ENCODE measurements at regions of chr19 and their contacts with region 1.

Region 1: DNA sequence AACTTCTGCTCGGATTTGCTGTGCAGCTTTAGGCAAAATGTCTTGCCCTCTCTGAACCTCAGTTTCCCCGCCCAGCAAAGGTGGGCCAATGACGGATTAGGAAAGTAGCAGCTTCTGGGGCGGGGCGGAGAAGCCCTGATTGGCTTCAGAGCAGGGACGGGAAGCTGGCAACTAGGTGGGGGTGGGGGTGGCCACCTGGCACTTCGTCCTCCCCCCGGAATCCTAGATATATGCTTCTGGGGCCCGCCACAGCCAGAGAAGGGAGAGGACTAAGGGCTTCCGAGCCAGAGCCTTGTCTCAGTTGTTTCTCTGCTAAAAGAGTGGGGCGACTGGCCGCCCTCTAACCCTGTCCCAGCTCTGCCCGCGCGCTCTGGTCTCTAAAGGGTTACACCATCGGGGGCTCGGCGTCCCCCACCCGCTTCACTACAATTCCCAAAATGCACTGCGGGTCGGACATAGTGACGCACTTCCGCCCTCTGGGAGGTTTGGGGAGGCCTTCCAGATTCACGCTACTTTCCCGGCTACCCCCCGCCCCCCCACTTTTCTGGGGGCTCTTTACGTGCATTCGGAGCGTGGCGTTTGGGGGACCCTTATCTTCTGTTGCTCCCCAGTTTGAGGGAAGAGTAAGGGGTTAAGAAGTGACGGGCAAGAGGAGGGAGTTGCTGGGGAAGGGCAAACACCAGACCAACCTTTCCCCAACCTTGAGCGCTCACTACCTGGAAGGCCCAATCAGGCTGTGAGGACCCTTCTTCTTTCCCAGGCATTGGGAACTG is 672 bp upstream of the IRF2BP1 start:
- DNase-seq: peak; percentile 81 to 96 (median 89)
- ATAC-seq: peak; percentile 69
- H3K4me3 ChIP-seq: peak overlapping the region; percentile 77 to 87
- H3K4me3 Mint-ChIP-seq: peak overlapping the region; percentile 98
- H3K27ac ChIP-seq: peak overlapping the region; percentile 69 to 92
- H3K27ac Mint-ChIP-seq: peak overlapping the region; percentile 97
- H3K4me1 ChIP-seq: peaks cover 41% of the 10 kb centered on the region
- H3K4me1 Mint-ChIP-seq: peaks cover 24% of the 10 kb centered on the region
- H3K27me3 ChIP-seq: no peaks in the 10 kb centered on the region
- H3K27me3 Mint-ChIP-seq: no peaks in the 10 kb centered on the region
- CTCF ChIP-seq: no peak

Region 2: GRCh38 chr19:45506246-45506990 is 380.2 kb before region 1 on chr19:
- CTCF ChIA-PET with region 1: no interaction called
- POLR2A ChIA-PET with region 1: no interaction called
- intact Hi-C with region 1: loop called in 1 of 2 experiments (anchors 5 kb)
- DNase-seq: peak; percentile 93 to 99 (median 97)
- ATAC-seq: peak; percentile 79
- H3K4me3 ChIP-seq: peak overlapping the region; percentile 74 to 90
- H3K4me3 Mint-ChIP-seq: peak overlapping the region; percentile 88
- H3K27ac ChIP-seq: peak overlapping the region; percentile 85 to 91
- H3K27ac Mint-ChIP-seq: peak overlapping the region; percentile 93
- H3K4me1 ChIP-seq: peaks cover 33% of the 10 kb centered on the region
- H3K4me1 Mint-ChIP-seq: peaks cover 39% of the 10 kb centered on the region
- H3K27me3 ChIP-seq: no peaks in the 10 kb centered on the region
- H3K27me3 Mint-ChIP-seq: no peaks in the 10 kb centered on the region
- CTCF ChIP-seq: peak; percentile 32

Region 3: GRCh38 chr19:45770192-45771101 is 116.2 kb before region 1 on chr19:
- CTCF ChIA-PET with region 1: interaction called, 4 read pairs
- POLR2A ChIA-PET with region 1: interaction called, 8 read pairs
- intact Hi-C with region 1: loop called (anchors 1 kb)
- DNase-seq: peak; percentile 79 to 94 (median 92)
- ATAC-seq: peak; percentile 74
- H3K4me3 ChIP-seq: peak overlapping the region; percentile 90 to 99
- H3K4me3 Mint-ChIP-seq: peak overlapping the region; percentile 84
- H3K27ac ChIP-seq: peak overlapping the region in 1 of 2 experiments; percentile 77
- H3K27ac Mint-ChIP-seq: peak overlapping the region; percentile 85
- H3K4me1 ChIP-seq: peaks cover 22% of the 10 kb centered on the region
- H3K4me1 Mint-ChIP-seq: peaks cover 24% of the 10 kb centered on the region
- H3K27me3 ChIP-seq: peaks cover 0 to 6% of the 10 kb centered on the region in 2 experiments
- H3K27me3 Mint-ChIP-seq: peaks cover 7% of the 10 kb centered on the region
- CTCF ChIP-seq: peak; percentile 99

Region 4: DNA sequence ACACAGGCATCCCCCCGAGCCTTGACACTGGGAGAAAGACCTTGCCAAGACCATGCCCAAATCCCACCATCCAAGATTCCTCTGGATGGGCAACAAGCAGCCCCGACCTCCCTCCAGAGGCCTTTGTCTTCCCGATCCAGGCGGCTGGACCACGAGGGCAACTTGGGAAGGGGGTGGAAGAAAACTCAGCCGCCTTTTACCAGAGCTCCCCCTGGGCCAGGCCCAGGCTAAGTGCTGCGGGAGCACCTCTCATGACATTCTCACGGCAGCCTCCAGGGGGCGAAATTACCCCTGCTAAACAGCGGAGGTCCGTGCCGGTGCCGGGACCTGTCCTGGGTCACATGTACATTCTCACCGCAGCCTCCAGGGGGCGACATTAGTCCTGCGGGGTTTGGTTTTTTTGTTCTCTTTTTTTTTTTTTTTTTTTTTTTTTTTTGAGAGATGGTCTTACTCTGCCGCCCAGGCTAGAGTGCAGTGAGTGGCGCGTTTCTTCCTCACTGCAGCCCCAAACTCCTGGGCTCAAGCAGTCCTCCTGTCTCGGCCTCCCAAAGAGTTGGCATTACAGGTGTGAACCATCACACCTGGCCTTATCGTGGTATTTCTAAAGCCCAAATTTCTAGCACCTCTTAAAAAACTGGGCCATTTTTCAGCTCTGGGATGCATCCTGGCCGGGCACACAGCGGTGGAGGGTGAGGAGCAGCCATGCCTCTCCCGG is 69.4 kb before region 1 on chr19:
- CTCF ChIA-PET with region 1: interaction called, 39 read pairs
- POLR2A ChIA-PET with region 1: interaction called, 3 read pairs
- intact Hi-C with region 1: loop called (anchors 1 kb)
- DNase-seq: peak; percentile 93 to 99 (median 95)
- ATAC-seq: peak; percentile 100
- H3K4me3 ChIP-seq: no peak overlapping the region
- H3K4me3 Mint-ChIP-seq: peak overlapping the region; percentile 18
- H3K27ac ChIP-seq: no peak overlapping the region
- H3K27ac Mint-ChIP-seq: no peak overlapping the region
- H3K4me1 ChIP-seq: peaks cover 16% of the 10 kb centered on the region
- H3K4me1 Mint-ChIP-seq: peaks cover 7% of the 10 kb centered on the region
- H3K27me3 ChIP-seq: peaks cover 0 to 5% of the 10 kb centered on the region in 2 experiments
- H3K27me3 Mint-ChIP-seq: peaks cover 8% of the 10 kb centered on the region
- CTCF ChIP-seq: peak; percentile 99

Region 5: DNA sequence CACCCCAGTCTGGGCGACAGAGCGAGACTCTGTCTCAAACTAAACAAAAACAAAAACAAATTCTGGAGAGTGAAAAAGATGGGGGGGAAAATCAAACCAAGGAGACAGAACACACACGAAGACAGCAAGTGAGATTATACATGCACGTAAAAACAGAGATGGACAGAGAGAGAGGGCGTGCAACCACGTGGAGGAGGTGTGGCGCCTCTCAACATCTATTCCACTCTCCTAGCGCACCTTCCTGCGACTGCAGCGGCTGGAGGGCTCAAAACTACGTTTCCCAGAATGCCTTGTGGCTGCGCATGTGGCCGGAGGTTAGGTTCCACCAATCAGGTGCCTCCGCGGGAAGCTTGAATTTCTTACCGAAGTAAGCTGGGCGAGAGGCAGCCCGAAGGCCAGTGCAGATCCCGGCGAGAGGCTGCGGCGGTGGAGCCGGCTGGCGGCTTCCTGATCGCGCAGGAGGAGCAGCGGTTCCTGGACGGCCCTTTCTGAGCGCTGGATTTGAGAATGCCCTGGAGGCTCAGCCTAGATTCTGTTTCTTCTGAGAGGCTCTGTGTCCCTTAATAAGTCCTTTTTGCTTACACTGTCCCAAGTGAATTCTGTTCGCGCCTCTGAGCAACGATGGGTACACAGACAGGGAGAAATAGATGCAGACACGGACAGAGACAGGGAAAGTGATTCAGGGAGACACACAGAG is 41.1 kb after region 1 on chr19:
- CTCF ChIA-PET with region 1: no interaction called
- POLR2A ChIA-PET with region 1: no interaction called
- intact Hi-C with region 1: loop called (anchors 1 kb)
- DNase-seq: peak; percentile 72 to 94 (median 88)
- ATAC-seq: peak; percentile 100
- H3K4me3 ChIP-seq: no peak overlapping the region
- H3K4me3 Mint-ChIP-seq: no peak overlapping the region
- H3K27ac ChIP-seq: no peak overlapping the region
- H3K27ac Mint-ChIP-seq: peak overlapping the region; percentile 7
- H3K4me1 ChIP-seq: peaks cover 7% of the 10 kb centered on the region
- H3K4me1 Mint-ChIP-seq: peaks cover 8% of the 10 kb centered on the region
- H3K27me3 ChIP-seq: no peaks in the 10 kb centered on the region
- H3K27me3 Mint-ChIP-seq: peaks cover 4% of the 10 kb centered on the region
- CTCF ChIP-seq: peak; percentile 15

Region 6: DNA sequence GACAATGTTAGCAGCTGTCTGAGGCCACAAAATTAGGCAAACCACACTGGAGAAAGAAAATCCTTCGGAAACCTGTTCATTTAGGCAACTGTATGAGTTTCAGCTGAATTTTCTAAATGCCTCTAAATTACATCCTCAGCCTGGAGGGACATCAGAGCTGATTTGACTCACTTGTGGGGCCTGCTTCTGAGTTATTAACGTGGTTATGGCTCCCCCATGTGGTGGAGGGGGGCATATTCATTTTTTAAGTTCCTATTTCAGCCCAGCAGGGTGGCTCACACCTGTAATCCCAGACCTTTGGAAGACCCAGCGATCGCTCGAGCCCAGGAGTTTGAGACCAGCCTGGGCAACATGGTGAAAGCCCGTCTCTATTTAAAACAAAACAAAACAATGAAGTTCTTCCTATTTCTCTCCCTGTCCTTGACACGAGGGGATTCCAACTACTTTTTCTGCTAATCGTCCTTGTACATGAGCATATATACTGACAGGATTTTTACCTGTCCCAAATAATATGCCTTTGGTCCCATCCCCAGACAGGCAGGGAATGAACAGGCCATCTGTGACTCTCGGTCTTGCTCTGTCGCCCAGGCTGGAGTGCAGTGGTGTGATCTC is 378.7 kb after region 1 on chr19:
- CTCF ChIA-PET with region 1: no interaction called
- POLR2A ChIA-PET with region 1: no interaction called
- intact Hi-C with region 1: loop called in 1 of 2 experiments (anchors 10 kb)
- DNase-seq: peak; percentile 37 to 87 (median 67)
- ATAC-seq: peak; percentile 58
- H3K4me3 ChIP-seq: no peak overlapping the region
- H3K4me3 Mint-ChIP-seq: no peak overlapping the region
- H3K27ac ChIP-seq: no peak overlapping the region
- H3K27ac Mint-ChIP-seq: no peak overlapping the region
- H3K4me1 ChIP-seq: peaks cover 14% of the 10 kb centered on the region
- H3K4me1 Mint-ChIP-seq: peaks cover 17% of the 10 kb centered on the region
- H3K27me3 ChIP-seq: peaks cover 2 to 26% of the 10 kb centered on the region in 2 experiments
- H3K27me3 Mint-ChIP-seq: peaks cover 35% of the 10 kb centered on the region
- CTCF ChIP-seq: peak; percentile 90

Measured in CD8-positive, alpha-beta T cell (primary cell).